ENCODE measurements at regions of chr21 and their contacts with region 1.

Region 1: GRCh38 chr21:37184784-37185593 is 82.1 kb downstream of the VPS26C start:
- DNase-seq: no peak
- ATAC-seq: no peak
- H3K4me3 ChIP-seq: no peak overlapping the region
- H3K27ac ChIP-seq: no peak overlapping the region
- H3K4me1 ChIP-seq: no peaks in the 10 kb centered on the region
- H3K27me3 ChIP-seq: no peaks in the 10 kb centered on the region
- CTCF ChIP-seq: no peak

Region 2: GRCh38 chr21:36589355-36589971 is 595.5 kb before region 1 on chr21:
- CTCF ChIA-PET with region 1: no interaction called
- POLR2A ChIA-PET with region 1: no interaction called
- in situ Hi-C with region 1: no loop called
- intact Hi-C with region 1: no loop called
- DNase-seq: no peak
- ATAC-seq: peak; percentile 80
- H3K4me3 ChIP-seq: no peak overlapping the region
- H3K27ac ChIP-seq: no peak overlapping the region
- H3K4me1 ChIP-seq: no peaks in the 10 kb centered on the region
- H3K27me3 ChIP-seq: no peaks in the 10 kb centered on the region; the same call in 1 of the 2 replicates
- CTCF ChIP-seq: peak; percentile 81

Region 3: DNA sequence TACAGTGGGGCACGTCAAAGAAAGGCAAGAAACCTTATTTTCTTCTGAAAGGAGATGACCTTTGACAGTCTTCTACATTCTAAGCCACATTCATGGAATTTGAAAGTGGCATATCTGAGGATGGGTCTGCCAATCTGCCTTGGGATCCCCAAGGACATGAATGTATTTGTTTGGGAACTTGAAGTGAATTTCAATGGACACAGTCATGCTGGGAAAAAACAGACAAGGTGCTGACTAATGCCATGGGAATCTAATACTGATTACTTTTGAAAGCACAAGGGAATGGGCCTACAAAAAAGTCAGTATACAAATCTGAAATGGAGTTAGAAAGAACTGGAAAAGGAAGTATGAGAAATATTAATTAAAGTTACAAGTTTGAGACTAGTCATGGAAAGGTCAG is 602.5 kb after region 1 on chr21:
- CTCF ChIA-PET with region 1: no interaction called
- POLR2A ChIA-PET with region 1: no interaction called
- in situ Hi-C with region 1: no loop called
- intact Hi-C with region 1: no loop called
- DNase-seq: no peak
- ATAC-seq: no peak
- H3K4me3 ChIP-seq: no peak overlapping the region
- H3K27ac ChIP-seq: no peak overlapping the region
- H3K4me1 ChIP-seq: no peaks in the 10 kb centered on the region
- H3K27me3 ChIP-seq: no peaks in the 10 kb centered on the region
- CTCF ChIP-seq: no peak

Region 4: GRCh38 chr21:37805266-37805665 is 620.3 kb after region 1 on chr21:
- CTCF ChIA-PET with region 1: no interaction called
- POLR2A ChIA-PET with region 1: interaction called, 11 read pairs
- in situ Hi-C with region 1: no loop called
- intact Hi-C with region 1: no loop called
- DNase-seq: no peak
- ATAC-seq: no peak
- H3K4me3 ChIP-seq: no peak overlapping the region
- H3K27ac ChIP-seq: no peak overlapping the region
- H3K4me1 ChIP-seq: no peaks in the 10 kb centered on the region
- H3K27me3 ChIP-seq: peaks cover 2% of the 10 kb centered on the region
- CTCF ChIP-seq: no peak

Measured in Panc1 (cell line).